Naive thymus-derived CD8-positive, alpha-beta T cell (primary cell): ENCODE measurements at regions of chr14 and their contacts with region 1.

Region 1: DNA sequence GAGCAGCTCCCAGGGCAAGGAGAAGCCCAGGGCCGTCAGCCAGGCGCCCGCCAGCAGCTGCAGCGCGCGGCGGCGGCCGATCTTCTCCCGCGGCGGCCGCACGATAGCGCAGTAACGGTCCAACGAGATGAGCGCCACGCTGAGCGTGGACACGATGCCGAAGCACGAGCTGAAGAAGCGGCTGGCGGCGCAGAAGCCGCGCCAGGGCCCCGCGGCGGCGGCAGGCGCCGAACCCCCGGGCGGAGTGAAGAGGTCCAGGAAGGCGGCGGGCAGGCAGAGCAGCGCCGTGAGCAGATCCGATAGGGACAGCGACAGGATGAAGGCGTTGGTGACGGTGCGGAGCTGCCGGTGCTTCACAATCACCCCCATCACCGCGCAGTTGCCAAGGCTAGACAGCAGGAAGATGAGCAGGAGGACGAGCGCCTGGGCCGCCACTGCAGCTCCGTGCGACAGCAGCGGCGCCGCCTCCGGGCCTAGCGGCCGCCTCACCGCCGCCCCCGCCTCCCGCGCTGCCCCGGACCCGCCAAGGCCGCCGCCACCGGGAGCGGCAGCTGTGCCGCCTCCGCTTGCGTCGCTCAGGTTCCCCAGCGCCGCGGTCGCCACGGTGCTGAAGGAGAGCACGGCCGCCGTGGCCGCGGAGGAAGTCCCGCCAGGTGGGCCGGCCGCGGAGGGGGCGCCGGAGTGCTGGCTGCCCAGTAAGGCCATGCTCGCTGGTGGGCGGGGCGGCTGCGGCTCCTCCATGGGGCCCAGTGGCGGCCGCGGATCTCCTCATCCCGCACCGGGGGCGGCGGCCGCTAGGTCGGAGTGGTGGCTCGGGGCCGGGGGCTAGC is 479 bp downstream of the GPR135 start:
- DNase-seq: peak; percentile 34 to 82 (median 50)
- ATAC-seq: peak; percentile 72
- H3K4me3 Mint-ChIP-seq: peak overlapping the region; percentile 82 to 94 (median 90)
- H3K27ac Mint-ChIP-seq: peak overlapping the region in 8 of 10 donors; percentile 28 to 94 (median 79)
- H3K4me1 Mint-ChIP-seq: peaks cover 6 to 14% (median 10%) of the 10 kb centered on the region in 4 donors
- H3K27me3 Mint-ChIP-seq: peaks cover 0 to 7% (median 3%) of the 10 kb centered on the region in 5 donors

Region 2: GRCh38 chr14:59360923-59361794 is 103.5 kb before region 1 on chr14:
- POLR2A ChIA-PET with region 1: no interaction called
- DNase-seq: no peak
- ATAC-seq: no peak
- H3K4me3 Mint-ChIP-seq: no peak overlapping the region
- H3K27ac Mint-ChIP-seq: peak overlapping the region in 1 of 10 donors; percentile 26
- H3K4me1 Mint-ChIP-seq: peaks cover 0 to 41% (median 0%) of the 10 kb centered on the region in 4 donors
- H3K27me3 Mint-ChIP-seq: no peaks in the 10 kb centered on the region

Region 3: DNA sequence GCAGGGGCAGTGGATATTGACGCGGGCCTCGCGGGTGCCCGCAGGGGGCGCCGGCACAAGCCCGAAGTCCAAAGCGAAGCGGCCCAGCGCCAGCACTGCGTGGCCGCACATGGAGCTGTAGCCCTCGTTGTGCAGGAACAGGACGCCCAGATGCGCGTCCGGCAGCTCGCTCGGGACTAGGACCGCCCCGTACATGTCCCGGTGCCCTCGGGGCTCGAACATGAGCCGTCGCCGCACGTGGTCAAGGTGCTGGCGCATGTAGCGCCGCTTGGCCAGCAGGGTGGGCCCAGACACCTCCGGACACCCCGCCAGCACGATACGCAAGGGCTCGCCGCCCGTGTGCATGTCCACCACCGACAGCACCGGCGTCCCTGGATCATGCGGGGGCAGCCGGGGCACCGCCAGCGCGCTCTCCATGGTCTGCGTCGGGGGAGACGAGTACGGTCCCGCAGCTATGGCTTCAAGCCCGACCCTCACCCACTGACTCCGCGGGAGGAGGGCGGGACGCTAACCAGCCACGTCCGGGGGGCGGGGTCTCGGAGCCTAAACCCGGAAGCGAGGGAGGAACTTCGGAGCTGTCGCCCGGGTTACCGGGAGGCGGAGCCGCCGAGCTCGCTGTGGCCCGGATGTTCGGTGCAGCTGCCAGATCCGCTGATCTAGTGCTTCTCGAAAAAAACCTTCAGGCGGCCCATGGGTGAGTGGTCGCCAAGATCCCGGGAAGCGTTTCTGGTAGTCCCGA is 19.4 kb after region 1 on chr14 and contains the starts of genes JKAMP and L3HYPDH:
- POLR2A ChIA-PET with region 1: interaction called, 20 read pairs
- DNase-seq: peak; percentile 94 to 99 (median 96)
- ATAC-seq: peak; percentile 90 to 94
- H3K4me3 Mint-ChIP-seq: peak within 1 kb of the TSS; percentile 86 to 99 (median 96)
- H3K27ac Mint-ChIP-seq: peak within 1 kb of the TSS; percentile 75 to 98 (median 94)
- H3K4me1 Mint-ChIP-seq: peaks cover 32 to 73% (median 65%) of the 10 kb centered on the region in 4 donors
- H3K27me3 Mint-ChIP-seq: no peaks in the 10 kb centered on the region
- polyA plus RNA-seq, gene JKAMP: 45.3 to 48.8 (median 46.0) TPM
- polyA plus RNA-seq, gene L3HYPDH: 1.8 to 2.5 (median 2.4) TPM